B cell (primary cell): ENCODE measurements at regions of chr1 and their contacts with region 1.

Region 1: DNA sequence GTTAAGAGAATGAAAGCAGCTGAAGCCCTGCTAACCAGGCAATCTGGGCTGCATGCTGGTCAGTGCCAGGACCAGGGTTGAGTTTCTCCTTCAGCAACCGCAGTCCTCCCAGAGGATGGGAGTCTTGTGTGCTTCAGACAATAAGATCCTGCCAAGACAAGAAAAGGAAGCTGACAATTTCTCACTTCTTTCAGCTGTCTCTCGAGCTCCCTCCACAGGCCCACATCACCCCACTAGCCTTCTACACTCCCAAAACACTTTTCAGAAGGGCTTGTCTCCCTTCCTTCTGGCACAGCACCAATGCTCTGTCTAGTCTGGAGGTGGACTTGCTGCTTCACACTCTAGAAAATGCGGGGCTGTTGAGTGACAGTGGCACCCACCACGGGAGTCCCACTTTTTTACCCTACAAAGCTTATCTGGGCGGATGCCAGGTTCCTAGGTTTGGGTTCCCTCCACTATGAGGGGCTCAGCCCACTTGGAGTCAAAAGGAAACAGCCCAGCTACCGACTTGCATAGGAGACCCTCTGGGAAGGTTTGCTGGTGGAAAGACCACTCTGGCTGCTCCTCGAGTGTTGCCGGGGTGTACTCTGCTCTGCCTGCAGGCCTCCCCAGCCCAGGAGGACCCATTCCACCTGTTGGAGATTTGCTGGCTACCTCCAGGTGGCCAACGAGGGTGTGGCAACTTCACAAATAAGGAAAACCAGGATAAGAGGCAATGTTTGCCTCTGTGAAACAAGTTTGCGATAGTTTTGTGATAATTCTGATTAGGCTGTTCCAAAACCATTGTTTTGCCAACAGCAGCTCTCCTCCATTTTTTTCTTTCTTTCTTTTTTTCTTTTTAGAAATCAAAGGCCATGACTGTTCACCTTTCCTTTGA is 68.9 kb downstream of the TENT5C start:
- DNase-seq: peak; percentile 81
- ATAC-seq: peak; percentile 77
- H3K4me3 ChIP-seq: no peak overlapping the region
- H3K4me3 Mint-ChIP-seq: peak overlapping the region; percentile 44
- H3K27ac ChIP-seq: no peak overlapping the region
- H3K27ac Mint-ChIP-seq: peak overlapping the region; percentile 84
- H3K4me1 ChIP-seq: peaks cover 36 to 43% of the 10 kb centered on the region in 2 donors
- H3K4me1 Mint-ChIP-seq: peaks cover 57% of the 10 kb centered on the region
- H3K27me3 ChIP-seq: no peaks in the 10 kb centered on the region
- H3K27me3 Mint-ChIP-seq: no peaks in the 10 kb centered on the region
- CTCF ChIP-seq: peak; percentile 73

Region 2: GRCh38 chr1:117059678-117060440 is 614.9 kb before region 1 on chr1 and contains the start of gene TTF2:
- CTCF ChIA-PET with region 1: no interaction called
- POLR2A ChIA-PET with region 1: no interaction called
- intact Hi-C with region 1: loop called (anchors 10 kb)
- DNase-seq: peak; percentile 98
- ATAC-seq: peak; percentile 96
- H3K4me3 ChIP-seq: peak within 1 kb of the TSS; percentile 71 to 95 (median 79)
- H3K4me3 Mint-ChIP-seq: no peak within 1 kb of the TSS
- H3K27ac ChIP-seq: peak within 1 kb of the TSS; percentile 69 to 76
- H3K27ac Mint-ChIP-seq: no peak within 1 kb of the TSS
- H3K4me1 ChIP-seq: peaks cover 14 to 17% of the 10 kb centered on the region in 2 donors
- H3K4me1 Mint-ChIP-seq: peaks cover 25% of the 10 kb centered on the region
- H3K27me3 ChIP-seq: no peaks in the 10 kb centered on the region
- H3K27me3 Mint-ChIP-seq: no peaks in the 10 kb centered on the region
- CTCF ChIP-seq: peak; percentile 5
- total RNA-seq, gene TTF2: 28.9 and 29.1 TPM in 2 replicates

Region 3: GRCh38 chr1:117527566-117528102 is 147.1 kb before region 1 on chr1:
- CTCF ChIA-PET with region 1: interaction called, 518 read pairs
- POLR2A ChIA-PET with region 1: no interaction called
- intact Hi-C with region 1: no loop called
- DNase-seq: no peak
- ATAC-seq: no peak
- H3K4me3 ChIP-seq: no peak overlapping the region
- H3K4me3 Mint-ChIP-seq: no peak overlapping the region
- H3K27ac ChIP-seq: no peak overlapping the region
- H3K27ac Mint-ChIP-seq: no peak overlapping the region
- H3K4me1 ChIP-seq: no peaks in the 10 kb centered on the region
- H3K4me1 Mint-ChIP-seq: no peaks in the 10 kb centered on the region
- H3K27me3 ChIP-seq: no peaks in the 10 kb centered on the region
- H3K27me3 Mint-ChIP-seq: no peaks in the 10 kb centered on the region
- CTCF ChIP-seq: no peak

Region 4: GRCh38 chr1:117594261-117594990 is 80.3 kb before region 1 on chr1:
- CTCF ChIA-PET with region 1: interaction called, 31 read pairs
- POLR2A ChIA-PET with region 1: no interaction called
- intact Hi-C with region 1: no loop called
- DNase-seq: no peak
- ATAC-seq: no peak
- H3K4me3 ChIP-seq: no peak overlapping the region
- H3K4me3 Mint-ChIP-seq: no peak overlapping the region
- H3K27ac ChIP-seq: no peak overlapping the region
- H3K27ac Mint-ChIP-seq: peak overlapping the region; percentile 46
- H3K4me1 ChIP-seq: peaks cover 16 to 26% of the 10 kb centered on the region in 2 donors
- H3K4me1 Mint-ChIP-seq: peaks cover 22% of the 10 kb centered on the region
- H3K27me3 ChIP-seq: no peaks in the 10 kb centered on the region
- H3K27me3 Mint-ChIP-seq: peaks cover 6% of the 10 kb centered on the region
- CTCF ChIP-seq: no peak

Region 5: DNA sequence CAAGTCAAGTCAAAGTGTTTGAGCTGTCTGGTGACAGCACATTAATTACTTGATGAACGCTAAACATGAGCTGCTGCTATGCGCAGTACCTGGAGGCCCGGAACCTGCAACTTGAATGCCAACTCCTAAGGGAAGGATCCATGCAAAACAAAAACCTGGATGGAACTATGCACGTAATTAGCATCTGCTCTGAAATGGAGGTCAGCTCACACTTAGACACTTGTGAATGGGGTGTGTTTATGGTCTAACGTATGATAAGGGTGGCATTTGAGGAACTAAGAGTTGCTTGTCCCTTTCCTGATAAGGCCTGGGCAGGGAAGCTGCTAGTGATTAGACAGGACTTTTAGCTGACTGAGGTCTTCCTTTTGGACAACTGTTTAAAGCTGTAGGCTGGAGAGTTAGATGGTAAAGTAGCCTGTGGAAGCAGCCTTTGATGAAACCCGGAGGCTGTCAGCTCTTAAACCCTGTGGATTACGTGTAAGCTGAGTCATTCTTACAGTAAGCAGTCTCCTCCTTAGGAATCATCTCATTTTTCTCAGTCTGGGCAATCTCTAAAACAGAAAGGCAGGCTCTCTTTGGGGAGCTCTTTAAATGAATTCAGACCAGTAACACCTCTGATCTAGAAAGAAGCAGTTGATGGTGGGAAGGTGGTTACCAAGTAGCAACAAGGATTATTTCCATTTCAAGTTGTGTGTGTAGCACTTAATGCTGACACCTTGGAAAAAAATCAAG is 62.1 kb before region 1 on chr1:
- CTCF ChIA-PET with region 1: interaction called, 85 read pairs
- POLR2A ChIA-PET with region 1: interaction called, 6 read pairs
- intact Hi-C with region 1: no loop called
- DNase-seq: peak; percentile 56
- ATAC-seq: peak; percentile 31
- H3K4me3 ChIP-seq: peak overlapping the region in 1 of 5 experiments; percentile 23
- H3K4me3 Mint-ChIP-seq: peak overlapping the region; percentile 84
- H3K27ac ChIP-seq: peak overlapping the region; percentile 0 to 52
- H3K27ac Mint-ChIP-seq: peak overlapping the region; percentile 84
- H3K4me1 ChIP-seq: peaks cover 93 to 100% of the 10 kb centered on the region in 2 donors
- H3K4me1 Mint-ChIP-seq: peaks cover 95% of the 10 kb centered on the region
- H3K27me3 ChIP-seq: no peaks in the 10 kb centered on the region
- H3K27me3 Mint-ChIP-seq: no peaks in the 10 kb centered on the region
- CTCF ChIP-seq: no peak

Region 6: GRCh38 chr1:117638759-117639158 is 36.0 kb before region 1 on chr1:
- CTCF ChIA-PET with region 1: interaction called, 38 read pairs
- POLR2A ChIA-PET with region 1: no interaction called
- intact Hi-C with region 1: loop called (anchors 2 kb)
- DNase-seq: no peak
- ATAC-seq: no peak
- H3K4me3 ChIP-seq: no peak overlapping the region
- H3K4me3 Mint-ChIP-seq: no peak overlapping the region
- H3K27ac ChIP-seq: no peak overlapping the region
- H3K27ac Mint-ChIP-seq: no peak overlapping the region
- H3K4me1 ChIP-seq: peaks cover 67 to 68% of the 10 kb centered on the region in 2 donors
- H3K4me1 Mint-ChIP-seq: peaks cover 56% of the 10 kb centered on the region
- H3K27me3 ChIP-seq: no peaks in the 10 kb centered on the region
- H3K27me3 Mint-ChIP-seq: no peaks in the 10 kb centered on the region
- CTCF ChIP-seq: no peak

Region 7: GRCh38 chr1:117654493-117655219 is 20.1 kb before region 1 on chr1:
- CTCF ChIA-PET with region 1: interaction called, 262 read pairs
- POLR2A ChIA-PET with region 1: interaction called, 7 read pairs
- intact Hi-C with region 1: loop called (anchors 2 kb)
- DNase-seq: peak; percentile 83
- ATAC-seq: peak; percentile 67
- H3K4me3 ChIP-seq: peak overlapping the region in 3 of 5 experiments; percentile 12 to 37 (median 28)
- H3K4me3 Mint-ChIP-seq: peak overlapping the region; percentile 75
- H3K27ac ChIP-seq: peak overlapping the region; percentile 93 to 96
- H3K27ac Mint-ChIP-seq: peak overlapping the region; percentile 93
- H3K4me1 ChIP-seq: peaks cover 96% of the 10 kb centered on the region in 2 donors
- H3K4me1 Mint-ChIP-seq: peaks cover 94% of the 10 kb centered on the region
- H3K27me3 ChIP-seq: no peaks in the 10 kb centered on the region
- H3K27me3 Mint-ChIP-seq: no peaks in the 10 kb centered on the region
- CTCF ChIP-seq: no peak

Region 8: GRCh38 chr1:118084400-118084799 is 409.6 kb after region 1 on chr1:
- CTCF ChIA-PET with region 1: no interaction called
- POLR2A ChIA-PET with region 1: no interaction called
- intact Hi-C with region 1: no loop called
- DNase-seq: no peak
- ATAC-seq: no peak
- H3K4me3 ChIP-seq: no peak overlapping the region
- H3K4me3 Mint-ChIP-seq: no peak overlapping the region
- H3K27ac ChIP-seq: no peak overlapping the region
- H3K27ac Mint-ChIP-seq: no peak overlapping the region
- H3K4me1 ChIP-seq: no peaks in the 10 kb centered on the region
- H3K4me1 Mint-ChIP-seq: no peaks in the 10 kb centered on the region
- H3K27me3 ChIP-seq: no peaks in the 10 kb centered on the region
- H3K27me3 Mint-ChIP-seq: peaks cover 7% of the 10 kb centered on the region
- CTCF ChIP-seq: no peak